ENCODE measurements at regions of chr10 and their contacts with region 1.

Region 1: DNA sequence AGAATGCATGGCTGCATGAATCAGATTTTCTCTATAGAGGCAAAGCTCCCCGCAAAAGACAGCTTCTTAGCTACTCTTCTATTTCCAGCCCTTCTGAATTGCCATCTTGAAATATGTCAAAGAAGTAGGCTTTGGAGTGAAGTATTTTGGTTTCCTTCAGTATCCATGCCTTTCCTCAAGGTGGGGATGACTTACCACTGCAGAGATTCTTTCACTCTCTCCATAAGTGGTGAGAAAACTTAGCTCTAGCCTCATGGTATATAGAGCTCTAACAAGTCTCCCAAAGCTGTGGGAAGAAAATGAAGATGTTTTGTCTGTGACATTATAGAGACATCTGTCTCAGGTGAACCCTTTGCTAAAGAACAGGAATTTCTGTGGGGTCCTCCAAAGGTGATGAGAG is 89.6 kb upstream of the ITGB1 start:
- DNase-seq: no peak
- ATAC-seq: no peak
- H3K4me3 ChIP-seq: no peak overlapping the region
- H3K4me3 Mint-ChIP-seq: no peak overlapping the region
- H3K27ac ChIP-seq: no peak overlapping the region
- H3K27ac Mint-ChIP-seq: peak overlapping the region in 1 of 2 donors; percentile 56
- H3K4me1 ChIP-seq: peaks cover 16% of the 10 kb centered on the region
- H3K4me1 Mint-ChIP-seq: peaks cover 31 to 34% of the 10 kb centered on the region in 2 donors
- H3K27me3 ChIP-seq: no peaks in the 10 kb centered on the region
- H3K27me3 Mint-ChIP-seq: no peaks in the 10 kb centered on the region
- CTCF ChIP-seq: no peak

Region 2: GRCh38 chr10:32971536-32972091 is 76.0 kb before region 1 on chr10:
- intact Hi-C with region 1: no loop called
- DNase-seq: no peak
- ATAC-seq: no peak
- H3K4me3 ChIP-seq: no peak overlapping the region
- H3K4me3 Mint-ChIP-seq: no peak overlapping the region
- H3K27ac ChIP-seq: no peak overlapping the region
- H3K27ac Mint-ChIP-seq: no peak overlapping the region
- H3K4me1 ChIP-seq: no peaks in the 10 kb centered on the region
- H3K4me1 Mint-ChIP-seq: no peaks in the 10 kb centered on the region
- H3K27me3 ChIP-seq: no peaks in the 10 kb centered on the region
- H3K27me3 Mint-ChIP-seq: no peaks in the 10 kb centered on the region
- CTCF ChIP-seq: no peak

Region 3: GRCh38 chr10:33125522-33126517 is 78.2 kb after region 1 on chr10:
- intact Hi-C with region 1: loop called (anchors 5 kb)
- DNase-seq: peak in 1 of 2 donors; percentile 77
- ATAC-seq: peak; percentile 78 to 81 (median 81)
- H3K4me3 ChIP-seq: no peak overlapping the region
- H3K4me3 Mint-ChIP-seq: peak overlapping the region; percentile 26
- H3K27ac ChIP-seq: peak overlapping the region; percentile 75
- H3K27ac Mint-ChIP-seq: peak overlapping the region; percentile 88 to 89
- H3K4me1 ChIP-seq: peaks cover 42% of the 10 kb centered on the region
- H3K4me1 Mint-ChIP-seq: peaks cover 42 to 45% of the 10 kb centered on the region in 2 donors
- H3K27me3 ChIP-seq: no peaks in the 10 kb centered on the region
- H3K27me3 Mint-ChIP-seq: no peaks in the 10 kb centered on the region
- CTCF ChIP-seq: no peak

Region 4: DNA sequence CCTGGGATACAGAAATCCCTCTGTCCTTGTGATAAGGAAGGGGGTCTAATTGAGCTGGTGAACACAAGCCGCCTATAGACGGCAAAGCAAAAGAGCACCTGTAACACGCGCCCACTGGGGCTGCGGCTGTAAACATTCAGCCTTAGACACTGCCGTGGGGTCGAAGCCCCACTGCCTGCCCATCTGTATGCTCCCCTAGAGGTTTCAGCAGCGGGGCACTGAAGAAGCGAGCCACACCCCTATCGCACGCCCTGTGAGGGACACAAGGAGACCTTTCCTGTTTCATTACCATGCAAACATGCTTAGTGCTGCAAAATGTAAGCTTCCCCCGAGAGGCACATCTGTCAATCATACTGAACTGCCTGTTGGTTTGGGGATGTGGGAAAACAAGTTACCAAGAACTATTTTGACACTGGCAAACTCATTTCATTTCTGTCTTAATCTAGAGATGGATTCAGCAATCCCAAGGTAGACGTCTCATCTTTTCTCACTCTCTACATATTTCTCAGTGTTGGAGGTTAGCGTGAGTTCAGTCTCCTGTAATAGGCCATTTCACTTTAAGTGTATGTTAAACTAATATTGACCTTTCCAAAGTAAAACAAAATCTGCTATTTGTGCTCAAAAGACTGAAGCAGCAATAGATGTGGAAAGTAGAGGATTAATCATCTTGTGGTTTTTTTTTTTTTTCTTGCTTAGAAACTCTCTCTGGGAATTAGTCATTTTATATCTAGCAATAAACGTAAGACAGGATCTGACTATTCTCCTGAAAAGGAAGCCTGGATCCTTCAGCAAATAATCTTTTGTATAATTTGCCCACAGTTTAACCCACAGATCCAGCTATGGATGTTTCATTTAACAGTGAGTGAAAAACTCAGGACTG is 204.9 kb after region 1 on chr10:
- intact Hi-C with region 1: no loop called
- DNase-seq: no peak
- ATAC-seq: no peak
- H3K4me3 ChIP-seq: no peak overlapping the region
- H3K4me3 Mint-ChIP-seq: no peak overlapping the region
- H3K27ac ChIP-seq: no peak overlapping the region
- H3K27ac Mint-ChIP-seq: no peak overlapping the region
- H3K4me1 ChIP-seq: peaks cover 6% of the 10 kb centered on the region
- H3K4me1 Mint-ChIP-seq: peaks cover 23 to 25% of the 10 kb centered on the region in 2 donors
- H3K27me3 ChIP-seq: no peaks in the 10 kb centered on the region
- H3K27me3 Mint-ChIP-seq: peaks cover 2 to 28% of the 10 kb centered on the region in 2 donors
- CTCF ChIP-seq: no peak